B cell (primary cell): ENCODE measurements at regions of chr19 and their contacts with region 1.

Region 1: GRCh38 chr19:39792999-39793546 is 14.4 kb downstream of the LEUTX start:
- DNase-seq: peak; percentile 88
- ATAC-seq: peak; percentile 94
- H3K4me3 ChIP-seq: peak overlapping the region; percentile 42 to 76 (median 58)
- H3K4me3 Mint-ChIP-seq: peak overlapping the region; percentile 79
- H3K27ac ChIP-seq: no peak overlapping the region
- H3K27ac Mint-ChIP-seq: peak overlapping the region; percentile 37
- H3K4me1 ChIP-seq: peaks cover 0 to 9% of the 10 kb centered on the region in 2 donors
- H3K4me1 Mint-ChIP-seq: peaks cover 8% of the 10 kb centered on the region
- H3K27me3 ChIP-seq: no peaks in the 10 kb centered on the region
- H3K27me3 Mint-ChIP-seq: peaks cover 6% of the 10 kb centered on the region
- CTCF ChIP-seq: peak; percentile 91

Region 2: DNA sequence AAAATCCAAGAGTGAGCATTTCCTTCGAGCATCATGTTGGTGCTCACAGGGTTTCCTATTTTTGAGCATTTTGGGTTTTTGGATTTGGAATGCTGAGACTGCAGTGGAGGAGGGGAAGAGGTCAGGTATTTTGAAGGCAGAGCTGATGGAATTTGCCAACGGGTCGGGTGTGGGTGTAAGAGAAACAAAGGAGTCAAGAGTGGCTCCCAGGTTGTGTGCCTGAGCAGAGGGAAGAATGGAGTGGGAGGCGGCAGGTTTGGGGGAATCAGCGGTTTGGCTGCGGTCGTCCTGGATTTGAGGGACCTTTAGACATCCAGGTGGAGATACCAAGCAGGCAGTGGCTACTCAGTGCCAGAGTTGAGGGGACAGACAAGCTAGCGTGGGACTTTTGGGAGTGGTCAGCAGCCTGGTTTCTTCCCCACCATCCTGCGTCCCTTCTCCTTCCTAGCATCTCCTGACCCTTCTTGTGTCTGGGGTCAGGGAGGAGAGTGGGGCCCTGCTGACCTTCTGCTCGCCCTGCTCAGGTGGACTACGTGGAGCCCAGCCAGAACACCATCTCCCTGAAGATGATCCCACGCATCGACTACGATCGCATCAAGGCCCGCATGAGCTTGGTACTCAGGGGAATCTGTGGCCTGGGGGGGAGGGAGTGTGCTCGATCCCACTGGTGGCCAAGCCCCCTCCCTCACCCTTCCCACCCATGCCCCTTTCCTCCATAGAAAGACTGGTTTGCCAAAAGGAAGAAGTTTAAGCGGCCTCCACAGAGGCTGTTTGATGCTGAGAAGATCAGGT is 326.9 kb before region 1 on chr19:
- CTCF ChIA-PET with region 1: no interaction called
- POLR2A ChIA-PET with region 1: no interaction called
- intact Hi-C with region 1: no loop called
- DNase-seq: no peak
- ATAC-seq: no peak
- H3K4me3 ChIP-seq: no peak overlapping the region
- H3K4me3 Mint-ChIP-seq: no peak overlapping the region
- H3K27ac ChIP-seq: no peak overlapping the region
- H3K27ac Mint-ChIP-seq: no peak overlapping the region
- H3K4me1 ChIP-seq: no peaks in the 10 kb centered on the region
- H3K4me1 Mint-ChIP-seq: no peaks in the 10 kb centered on the region
- H3K27me3 ChIP-seq: no peaks in the 10 kb centered on the region
- H3K27me3 Mint-ChIP-seq: no peaks in the 10 kb centered on the region
- CTCF ChIP-seq: no peak

Region 3: GRCh38 chr19:39780894-39781293 is 12.2 kb before region 1 on chr19:
- CTCF ChIA-PET with region 1: interaction called, 20 read pairs
- POLR2A ChIA-PET with region 1: no interaction called
- intact Hi-C with region 1: no loop called
- DNase-seq: no peak
- ATAC-seq: no peak
- H3K4me3 ChIP-seq: no peak overlapping the region
- H3K4me3 Mint-ChIP-seq: no peak overlapping the region
- H3K27ac ChIP-seq: no peak overlapping the region
- H3K27ac Mint-ChIP-seq: no peak overlapping the region
- H3K4me1 ChIP-seq: no peaks in the 10 kb centered on the region
- H3K4me1 Mint-ChIP-seq: no peaks in the 10 kb centered on the region
- H3K27me3 ChIP-seq: peaks cover 0 to 19% (median 13%) of the 10 kb centered on the region in 4 experiments
- H3K27me3 Mint-ChIP-seq: peaks cover 62% of the 10 kb centered on the region
- CTCF ChIP-seq: no peak

Region 4: DNA sequence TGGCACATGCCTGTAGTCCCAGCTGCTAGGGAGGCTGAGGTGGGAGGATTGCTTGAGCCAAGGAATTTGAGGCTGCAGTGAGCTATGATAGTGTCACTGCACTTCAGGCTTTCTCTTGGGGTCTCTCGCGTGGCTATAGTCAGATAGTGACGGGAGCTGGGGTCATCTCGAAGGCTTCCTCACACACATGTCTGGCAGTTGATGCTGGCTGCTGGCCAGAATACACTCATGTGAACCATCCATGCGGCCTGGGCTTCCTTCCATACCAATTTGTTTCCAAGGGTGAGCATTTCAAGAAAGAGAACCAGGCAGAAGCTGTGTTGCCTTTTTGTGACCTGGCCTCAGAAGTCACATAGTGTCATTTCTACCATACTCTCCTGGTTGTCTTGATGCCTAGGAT is 12.0 kb after region 1 on chr19:
- CTCF ChIA-PET with region 1: interaction called, 27 read pairs
- POLR2A ChIA-PET with region 1: no interaction called
- intact Hi-C with region 1: no loop called
- DNase-seq: no peak
- ATAC-seq: no peak
- H3K4me3 ChIP-seq: no peak overlapping the region
- H3K4me3 Mint-ChIP-seq: no peak overlapping the region
- H3K27ac ChIP-seq: no peak overlapping the region
- H3K27ac Mint-ChIP-seq: no peak overlapping the region
- H3K4me1 ChIP-seq: no peaks in the 10 kb centered on the region
- H3K4me1 Mint-ChIP-seq: no peaks in the 10 kb centered on the region
- H3K27me3 ChIP-seq: peaks cover 0 to 23% (median 17%) of the 10 kb centered on the region in 4 experiments
- H3K27me3 Mint-ChIP-seq: peaks cover 29% of the 10 kb centered on the region
- CTCF ChIP-seq: no peak

Region 5: GRCh38 chr19:40165362-40165937 is 372.4 kb after region 1 on chr19:
- CTCF ChIA-PET with region 1: interaction called, 3 read pairs
- POLR2A ChIA-PET with region 1: no interaction called
- intact Hi-C with region 1: loop called (anchors 2 kb)
- DNase-seq: peak; percentile 65
- ATAC-seq: peak; percentile 52
- H3K4me3 ChIP-seq: no peak overlapping the region
- H3K4me3 Mint-ChIP-seq: peak overlapping the region; percentile 61
- H3K27ac ChIP-seq: no peak overlapping the region
- H3K27ac Mint-ChIP-seq: peak overlapping the region; percentile 67
- H3K4me1 ChIP-seq: peaks cover 27 to 38% of the 10 kb centered on the region in 2 donors
- H3K4me1 Mint-ChIP-seq: peaks cover 25% of the 10 kb centered on the region
- H3K27me3 ChIP-seq: no peaks in the 10 kb centered on the region
- H3K27me3 Mint-ChIP-seq: no peaks in the 10 kb centered on the region
- CTCF ChIP-seq: peak; percentile 71